ENCODE measurements at regions of chr11 and their contacts with region 1.

Region 1: GRCh38 chr11:236774-237767 is at the start of gene PSMD13:
- DNase-seq: peak; percentile 96
- total RNA-seq, gene PSMD13: 87.5 TPM

Region 2: DNA sequence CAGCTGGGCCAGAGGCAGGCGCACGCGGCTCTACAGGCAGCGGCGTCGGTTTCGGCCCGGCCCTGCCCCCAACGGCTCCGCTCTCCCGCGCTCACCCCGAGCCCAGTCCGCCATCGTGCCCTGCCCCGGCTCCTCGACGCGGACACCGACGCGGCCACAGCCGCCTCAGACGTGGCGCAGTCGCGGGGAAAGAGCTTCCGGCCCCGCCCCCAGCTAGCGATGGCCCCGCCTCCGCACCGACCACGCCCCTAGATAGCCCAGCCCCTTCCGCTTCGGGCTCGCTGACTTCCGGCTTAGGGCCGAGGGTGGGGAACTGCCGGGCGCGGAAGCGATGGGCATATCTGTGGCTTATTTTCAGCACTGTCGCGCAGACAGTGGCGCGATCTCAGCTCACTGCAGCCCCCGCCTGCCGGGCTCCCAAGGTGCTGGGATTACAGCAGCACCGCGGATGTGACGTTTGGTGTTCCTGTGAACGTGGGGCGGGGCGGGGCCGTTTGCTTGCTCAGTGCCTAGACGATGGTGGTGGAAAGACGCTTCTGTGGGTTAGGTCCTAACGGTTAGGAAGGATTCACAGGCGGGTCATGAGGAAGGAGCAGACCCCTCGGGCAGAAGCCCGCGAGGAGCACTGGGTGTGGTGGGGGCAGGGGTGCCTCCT is 29.7 kb before region 1 on chr11 and contains the starts of genes BET1L and RIC8A:
- intact Hi-C with region 1: loop called (anchors 1 kb)
- DNase-seq: peak; percentile 98
- total RNA-seq, gene BET1L: 24.9 TPM
- total RNA-seq, gene RIC8A: 63.4 TPM

Region 3: DNA sequence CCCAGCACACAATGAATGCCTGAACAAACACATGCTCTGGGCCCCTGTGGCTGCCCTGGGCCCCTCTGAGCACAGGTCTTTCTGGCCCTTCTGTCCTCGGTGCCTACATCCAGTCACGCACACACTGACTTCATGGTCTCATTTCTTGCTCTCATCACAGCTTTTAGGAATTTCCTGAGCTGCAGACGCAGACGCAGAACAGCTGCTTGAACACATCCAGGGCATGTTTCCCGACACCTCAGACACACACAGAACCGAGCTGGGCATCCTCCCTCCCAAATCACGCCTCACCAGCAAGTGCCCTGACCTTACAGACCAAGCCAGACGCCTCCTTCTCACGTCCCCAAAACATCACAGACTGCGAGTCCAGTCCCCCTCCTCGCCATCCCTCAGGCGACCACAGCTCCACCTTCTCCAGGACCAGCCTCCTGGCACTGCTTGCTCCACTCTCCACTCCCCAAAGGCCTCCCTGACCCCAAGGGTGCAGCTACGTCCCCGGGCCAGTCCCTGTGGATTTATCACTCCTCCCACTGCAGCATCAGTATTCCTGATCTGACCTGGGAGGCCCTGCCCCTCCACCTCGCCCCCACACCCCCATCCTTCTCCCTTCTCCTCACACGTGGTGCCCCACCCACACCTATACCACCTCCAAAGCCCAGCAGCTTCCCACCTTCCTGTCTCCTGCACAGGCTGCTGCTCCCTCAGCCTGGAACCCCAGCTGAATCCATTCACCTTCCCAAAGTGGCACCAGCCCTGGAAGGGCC is 13.9 kb before region 1 on chr11:
- intact Hi-C with region 1: no loop called
- DNase-seq: no peak

Region 4: GRCh38 chr11:316031-316701 is 79.1 kb after region 1 on chr11:
- intact Hi-C with region 1: no loop called
- DNase-seq: no peak

Region 5: GRCh38 chr11:534396-535209 is 297.5 kb after region 1 on chr11:
- intact Hi-C with region 1: no loop called
- DNase-seq: no peak